Naive thymus-derived CD4-positive, alpha-beta T cell (primary cell): ENCODE measurements at regions of chr6 and their contacts with region 1.

Region 1: DNA sequence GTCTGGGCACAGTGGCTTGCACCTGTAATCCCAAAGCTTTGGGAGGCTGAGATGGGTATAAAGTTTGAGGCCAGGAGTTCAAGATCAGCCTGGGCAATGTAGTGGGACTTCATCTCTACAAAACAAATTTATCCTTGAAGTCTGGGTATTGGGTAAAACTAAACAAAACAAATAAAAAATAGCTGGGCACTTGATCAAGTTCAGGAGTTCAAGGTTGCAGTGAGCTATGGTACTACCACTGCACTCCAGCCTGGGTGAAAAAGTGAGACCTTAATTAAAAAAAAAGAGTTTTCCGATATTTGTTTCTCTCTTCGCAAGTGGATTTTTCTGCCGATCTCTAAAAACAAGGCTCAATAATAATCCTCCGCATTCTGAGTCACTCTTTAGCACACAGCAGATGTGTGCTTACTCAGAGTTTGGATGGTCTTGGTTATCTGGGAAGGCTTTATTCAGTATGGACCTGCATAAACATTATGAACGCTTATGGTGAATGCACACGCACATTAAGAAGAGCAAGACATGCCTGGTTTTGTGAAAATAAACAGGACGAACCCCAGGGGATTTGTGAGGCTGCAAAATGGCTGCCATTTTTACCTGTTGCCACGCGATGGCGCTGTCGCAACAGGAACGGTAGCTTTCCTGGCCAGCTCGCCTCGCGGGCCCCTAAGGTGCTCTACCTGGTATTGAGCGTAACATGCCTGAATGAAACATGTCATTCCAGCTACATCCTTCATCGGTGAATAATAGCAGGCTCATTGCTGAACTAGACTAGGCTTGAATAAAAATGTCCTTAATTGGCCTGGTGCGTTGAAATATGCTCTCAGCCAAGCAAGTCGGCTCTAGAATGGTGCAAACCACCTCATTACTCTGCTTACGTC is 6.0 kb downstream of the OPN5 start:
- DNase-seq: peak; percentile 15 to 54 (median 41)
- ATAC-seq: peak; percentile 75
- H3K4me3 ChIP-seq: no peak overlapping the region
- H3K4me3 Mint-ChIP-seq: peak overlapping the region in 4 of 10 donors; percentile 14 to 58 (median 30)
- H3K27ac ChIP-seq: no peak overlapping the region
- H3K27ac Mint-ChIP-seq: no peak overlapping the region
- H3K4me1 ChIP-seq: no peaks in the 10 kb centered on the region
- H3K4me1 Mint-ChIP-seq: peaks cover 0 to 6% (median 0%) of the 10 kb centered on the region in 7 donors
- H3K27me3 ChIP-seq: no peaks in the 10 kb centered on the region
- H3K27me3 Mint-ChIP-seq: peaks cover 26 to 55% (median 43%) of the 10 kb centered on the region in 5 donors

Region 2: DNA sequence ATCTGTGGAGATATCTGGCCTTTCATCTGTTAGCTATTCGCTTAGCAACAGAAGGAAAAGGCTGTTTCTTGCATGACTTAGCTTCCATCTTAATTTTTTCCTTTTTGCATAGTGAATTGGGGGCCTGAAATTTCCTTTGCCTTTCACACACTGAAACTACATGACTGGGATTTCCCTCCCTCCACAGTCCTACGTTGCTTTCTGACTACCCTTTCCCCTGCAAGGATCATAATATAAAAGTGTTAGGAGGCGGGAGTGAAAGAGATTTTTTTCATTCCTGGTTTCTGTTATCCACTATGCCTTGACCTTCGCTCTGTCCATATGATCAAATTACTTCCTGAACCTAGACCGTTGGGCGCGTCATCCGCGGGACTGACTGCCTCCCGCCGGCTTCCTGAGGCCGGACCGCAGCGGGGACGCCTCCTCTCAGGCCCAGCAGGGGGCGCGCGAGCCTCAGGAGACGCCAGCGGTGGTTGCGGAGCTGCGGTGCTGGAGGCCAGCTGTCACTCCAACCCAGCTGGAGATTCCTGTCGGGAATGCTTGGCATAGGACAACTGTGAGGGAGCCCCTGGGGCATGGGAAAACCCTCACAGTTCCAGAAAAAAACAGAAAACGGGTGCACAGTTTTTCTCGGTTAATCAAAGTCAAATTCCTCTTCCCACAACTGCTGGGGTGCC is 939.0 kb before region 1 on chr6:
- CTCF ChIA-PET with region 1: no interaction called
- POLR2A ChIA-PET with region 1: no interaction called
- intact Hi-C with region 1: loop called in 1 of 2 experiments (anchors 10 kb)
- DNase-seq: peak in 8 of 9 donors; percentile 18 to 72 (median 38)
- ATAC-seq: peak; percentile 87
- H3K4me3 ChIP-seq: no peak overlapping the region
- H3K4me3 Mint-ChIP-seq: peak overlapping the region in 7 of 10 donors; percentile 7 to 68 (median 58)
- H3K27ac ChIP-seq: no peak overlapping the region
- H3K27ac Mint-ChIP-seq: no peak overlapping the region
- H3K4me1 ChIP-seq: no peaks in the 10 kb centered on the region
- H3K4me1 Mint-ChIP-seq: peaks cover 4 to 7% (median 6%) of the 10 kb centered on the region in 7 donors
- H3K27me3 ChIP-seq: no peaks in the 10 kb centered on the region
- H3K27me3 Mint-ChIP-seq: peaks cover 13 to 33% (median 25%) of the 10 kb centered on the region in 5 donors

Region 3: DNA sequence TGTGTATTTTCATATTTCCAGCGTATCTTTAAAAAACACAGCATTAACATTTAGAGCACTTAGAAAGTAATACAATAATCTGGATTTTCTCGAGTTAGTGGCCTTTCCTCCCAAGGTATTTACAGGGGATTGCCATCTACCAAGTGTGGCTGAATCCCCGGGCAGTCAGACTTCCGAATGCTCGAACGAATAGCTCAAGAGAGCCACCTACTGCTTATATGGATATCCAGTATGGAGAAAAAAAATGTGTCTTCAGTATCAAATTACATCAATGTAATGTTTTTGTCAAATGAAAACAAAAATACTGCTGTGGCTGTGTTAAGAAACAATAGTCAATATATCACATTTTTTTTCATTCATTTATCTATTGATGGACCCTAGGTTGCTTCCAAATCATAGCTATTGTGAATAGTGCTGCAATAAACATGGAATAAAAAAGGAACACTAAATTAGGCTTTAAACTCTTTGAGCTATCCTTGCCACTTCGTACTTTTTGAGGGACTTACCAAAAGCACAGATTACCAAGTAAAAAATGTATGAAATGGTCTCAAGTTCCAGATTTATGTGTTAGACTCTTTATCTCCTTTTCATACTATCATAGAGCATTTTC is 977.6 kb after region 1 on chr6:
- CTCF ChIA-PET with region 1: no interaction called
- POLR2A ChIA-PET with region 1: no interaction called
- intact Hi-C with region 1: loop called in 1 of 2 experiments (anchors 5 kb)
- DNase-seq: no peak
- ATAC-seq: no peak
- H3K4me3 ChIP-seq: no peak overlapping the region
- H3K4me3 Mint-ChIP-seq: no peak overlapping the region
- H3K27ac ChIP-seq: no peak overlapping the region
- H3K27ac Mint-ChIP-seq: no peak overlapping the region
- H3K4me1 ChIP-seq: no peaks in the 10 kb centered on the region
- H3K4me1 Mint-ChIP-seq: no peaks in the 10 kb centered on the region
- H3K27me3 ChIP-seq: no peaks in the 10 kb centered on the region
- H3K27me3 Mint-ChIP-seq: no peaks in the 10 kb centered on the region

Region 4: GRCh38 chr6:49409951-49410542 is 1622.2 kb after region 1 on chr6:
- CTCF ChIA-PET with region 1: interaction called, 3 read pairs
- POLR2A ChIA-PET with region 1: no interaction called
- intact Hi-C with region 1: loop called (anchors 1 kb)
- DNase-seq: peak; percentile 5 to 41 (median 28)
- ATAC-seq: peak; percentile 79
- H3K4me3 ChIP-seq: no peak overlapping the region
- H3K4me3 Mint-ChIP-seq: no peak overlapping the region
- H3K27ac ChIP-seq: no peak overlapping the region
- H3K27ac Mint-ChIP-seq: no peak overlapping the region
- H3K4me1 ChIP-seq: no peaks in the 10 kb centered on the region
- H3K4me1 Mint-ChIP-seq: no peaks in the 10 kb centered on the region
- H3K27me3 ChIP-seq: peaks cover 0 to 5% of the 10 kb centered on the region in 2 donors
- H3K27me3 Mint-ChIP-seq: peaks cover 4 to 26% (median 21%) of the 10 kb centered on the region in 5 donors